Activated CD4-positive, alpha-beta memory T cell treated with anti-CD3 and anti-CD28 coated beads for 36 hours (primary cell): ENCODE measurements at regions of chr7 and their contacts with region 1.

Region 1: GRCh38 chr7:101217388-101218235 is at the starts of genes PLOD3 and ZNHIT1:
- DNase-seq: peak; percentile 98
- H3K4me3 Mint-ChIP-seq: peak within 1 kb of the TSS; percentile 92
- H3K27ac Mint-ChIP-seq: peak within 1 kb of the TSS; percentile 76
- H3K4me1 Mint-ChIP-seq: peaks cover 35% of the 10 kb centered on the region
- H3K27me3 Mint-ChIP-seq: no peaks in the 10 kb centered on the region
- total RNA-seq, gene PLOD3: 37.1 to 43.4 TPM
- total RNA-seq, gene ZNHIT1: 40.2 to 42.8 TPM

Region 2: DNA sequence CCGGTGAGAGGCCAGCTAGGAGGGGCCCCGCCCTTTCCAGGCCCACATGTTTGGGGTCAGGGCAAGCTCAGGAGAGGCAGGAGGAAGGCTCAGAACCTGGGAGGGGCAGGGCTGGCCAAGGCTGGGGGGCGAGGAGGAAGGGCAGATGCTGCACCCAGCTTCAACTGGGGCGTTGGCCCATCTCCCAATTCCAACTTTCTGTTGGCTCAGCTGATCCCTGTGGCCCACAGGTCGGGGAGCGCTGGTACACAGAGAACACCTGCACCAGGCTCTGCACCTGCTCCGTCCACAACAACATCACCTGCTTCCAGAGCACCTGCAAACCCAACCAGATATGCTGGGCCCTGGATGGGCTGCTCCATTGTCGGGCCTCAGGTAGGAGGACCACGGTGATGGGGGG is 444.1 kb before region 1 on chr7:
- CTCF ChIA-PET with region 1: no interaction called
- POLR2A ChIA-PET with region 1: no interaction called
- intact Hi-C with region 1: no loop called
- DNase-seq: no peak
- H3K4me3 Mint-ChIP-seq: no peak overlapping the region
- H3K27ac Mint-ChIP-seq: no peak overlapping the region
- H3K4me1 Mint-ChIP-seq: no peaks in the 10 kb centered on the region
- H3K27me3 Mint-ChIP-seq: peaks cover 5% of the 10 kb centered on the region

Region 3: DNA sequence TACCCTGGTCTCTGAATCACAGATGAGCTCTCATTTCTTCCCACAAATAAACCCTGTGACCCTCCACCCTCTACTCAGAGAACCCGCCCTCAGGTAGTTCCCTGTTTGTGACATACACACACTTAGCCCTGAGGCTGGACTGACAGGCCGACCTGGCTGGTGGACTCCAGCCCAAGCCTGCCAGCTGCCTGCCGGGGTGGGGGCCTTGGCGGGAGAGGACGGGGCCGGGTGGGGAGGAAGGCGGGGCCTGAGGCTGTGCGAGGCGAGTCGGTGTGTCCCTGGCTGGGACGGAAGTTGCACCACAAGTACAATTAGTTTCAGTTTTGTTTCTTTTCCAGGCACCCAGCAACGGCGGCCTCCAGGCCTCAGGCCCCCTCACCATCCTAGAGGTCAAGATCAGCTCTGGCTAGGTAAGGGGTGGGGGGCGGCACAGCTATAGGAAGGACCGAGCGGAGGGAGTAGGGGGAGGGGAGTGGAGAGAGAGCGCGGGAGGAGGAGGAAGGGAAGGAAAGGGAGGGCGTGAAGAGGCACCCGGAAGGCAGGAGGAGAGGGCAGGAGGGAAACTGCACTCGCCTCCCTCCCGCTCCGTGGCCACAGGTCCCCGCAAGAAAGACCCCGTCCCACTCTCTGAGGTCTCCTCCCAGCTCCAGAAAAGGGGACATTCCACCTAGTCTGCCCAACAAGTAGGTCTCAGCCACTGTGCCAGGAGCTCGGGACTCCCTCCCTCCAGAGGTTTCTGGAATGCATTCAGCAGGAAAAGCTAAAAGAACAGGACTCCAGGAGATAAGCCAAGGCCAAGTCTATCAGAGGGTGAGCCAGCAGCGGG is 132.2 kb before region 1 on chr7 and contains the start of gene TRIM56:
- CTCF ChIA-PET with region 1: interaction called, 3 read pairs
- POLR2A ChIA-PET with region 1: interaction called, 4 read pairs
- intact Hi-C with region 1: loop called (anchors 10 kb)
- DNase-seq: peak; percentile 88
- H3K4me3 Mint-ChIP-seq: peak within 1 kb of the TSS; percentile 97
- H3K27ac Mint-ChIP-seq: peak within 1 kb of the TSS; percentile 98
- H3K4me1 Mint-ChIP-seq: peaks cover 24% of the 10 kb centered on the region
- H3K27me3 Mint-ChIP-seq: no peaks in the 10 kb centered on the region
- total RNA-seq, gene TRIM56: 42.3 to 44.5 TPM

Region 4: GRCh38 chr7:101132646-101133600 is 84.7 kb before region 1 on chr7:
- CTCF ChIA-PET with region 1: no interaction called
- POLR2A ChIA-PET with region 1: no interaction called
- intact Hi-C with region 1: no loop called
- DNase-seq: no peak
- H3K4me3 Mint-ChIP-seq: no peak overlapping the region
- H3K27ac Mint-ChIP-seq: no peak overlapping the region
- H3K4me1 Mint-ChIP-seq: peaks cover 33% of the 10 kb centered on the region
- H3K27me3 Mint-ChIP-seq: peaks cover 27% of the 10 kb centered on the region

Region 5: GRCh38 chr7:101185258-101185839 is 32.3 kb before region 1 on chr7:
- CTCF ChIA-PET with region 1: no interaction called
- POLR2A ChIA-PET with region 1: no interaction called
- intact Hi-C with region 1: no loop called
- DNase-seq: no peak
- H3K4me3 Mint-ChIP-seq: no peak overlapping the region
- H3K27ac Mint-ChIP-seq: no peak overlapping the region
- H3K4me1 Mint-ChIP-seq: peaks cover 5% of the 10 kb centered on the region
- H3K27me3 Mint-ChIP-seq: peaks cover 22% of the 10 kb centered on the region

Region 6: DNA sequence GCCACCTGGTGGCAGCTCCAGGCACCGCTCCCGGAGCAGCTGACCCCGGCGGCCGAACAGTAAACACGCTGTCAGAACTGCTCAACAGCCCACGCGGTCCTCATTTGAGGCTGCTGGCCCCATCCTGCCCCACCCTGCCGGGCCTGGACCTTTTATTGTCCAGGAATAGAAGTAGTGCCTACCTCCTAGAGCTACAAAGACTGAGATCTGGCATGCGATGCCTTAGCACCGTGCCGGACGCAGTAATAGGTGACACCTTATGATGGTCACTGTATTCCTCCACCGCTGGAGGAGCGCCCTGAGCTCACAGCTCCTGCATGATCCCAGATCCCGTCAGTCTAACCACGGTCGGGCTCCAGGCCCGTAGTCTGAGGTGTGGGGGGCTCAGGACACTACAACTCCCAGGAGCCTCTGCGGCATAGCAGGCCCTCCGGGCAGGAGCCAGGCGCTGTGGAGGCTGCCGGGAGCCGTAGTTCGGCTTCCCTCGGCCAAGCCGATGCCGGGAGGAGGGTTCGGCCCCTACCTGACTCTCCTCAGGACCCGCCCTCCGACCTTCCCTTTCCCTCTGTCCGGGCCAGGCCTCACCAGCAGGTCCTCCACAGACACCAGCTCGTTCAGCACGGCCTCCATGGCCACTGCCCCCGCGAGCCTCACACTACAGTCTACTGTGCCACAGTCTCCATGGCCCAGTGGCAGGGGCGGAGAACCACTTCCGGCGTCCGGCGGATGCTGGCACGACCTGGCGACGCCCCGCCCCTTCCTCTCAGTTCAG is 26.9 kb after region 1 on chr7 and contains the start of gene FIS1:
- CTCF ChIA-PET with region 1: interaction called, 62 read pairs
- POLR2A ChIA-PET with region 1: interaction called, 26 read pairs
- intact Hi-C with region 1: loop called (anchors 1 kb)
- DNase-seq: peak; percentile 95
- H3K4me3 Mint-ChIP-seq: peak within 1 kb of the TSS; percentile 95
- H3K27ac Mint-ChIP-seq: peak within 1 kb of the TSS; percentile 92
- H3K4me1 Mint-ChIP-seq: peaks cover 22% of the 10 kb centered on the region
- H3K27me3 Mint-ChIP-seq: no peaks in the 10 kb centered on the region
- total RNA-seq, gene FIS1: 96.1 to 98.7 TPM

Region 7: GRCh38 chr7:101251871-101252659 is 34.5 kb after region 1 on chr7:
- CTCF ChIA-PET with region 1: interaction called, 4 read pairs
- POLR2A ChIA-PET with region 1: interaction called, 13 read pairs
- intact Hi-C with region 1: no loop called
- DNase-seq: peak; percentile 99
- H3K4me3 Mint-ChIP-seq: peak overlapping the region; percentile 95
- H3K27ac Mint-ChIP-seq: peak overlapping the region; percentile 92
- H3K4me1 Mint-ChIP-seq: peaks cover 20% of the 10 kb centered on the region
- H3K27me3 Mint-ChIP-seq: peaks cover 3% of the 10 kb centered on the region